ENCODE measurements at regions of chr16 and their contacts with region 1.

Region 1: DNA sequence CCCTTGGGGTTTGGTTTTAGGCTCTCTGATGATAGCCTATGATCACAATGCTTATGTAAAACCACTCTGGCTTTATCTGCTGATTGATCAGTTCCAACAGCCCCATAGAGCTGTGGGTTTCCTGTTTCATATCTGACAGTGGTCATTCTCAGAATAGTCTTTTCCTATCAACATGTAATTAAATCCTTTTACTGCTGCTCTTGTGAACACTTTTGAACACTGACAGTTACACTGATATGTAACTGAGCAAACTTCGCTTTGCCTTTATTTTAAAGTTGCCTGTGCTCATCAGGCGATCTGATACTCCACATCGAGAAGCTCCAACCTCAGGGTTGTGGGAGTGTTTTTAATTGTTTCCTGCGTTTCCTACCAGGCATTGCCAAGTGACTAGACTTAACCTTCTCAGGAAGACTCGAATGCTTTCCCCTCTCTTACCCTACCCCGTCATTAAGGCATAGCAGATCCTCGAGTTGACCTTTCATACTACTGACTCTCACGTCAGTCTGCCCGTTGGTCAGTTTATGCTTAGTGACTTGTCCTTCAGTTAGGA is 17.3 kb upstream of the CLEC18B start:
- DNase-seq: no peak
- H3K4me3 ChIP-seq: no peak overlapping the region
- H3K27ac ChIP-seq: peak overlapping the region; percentile 25
- H3K4me1 ChIP-seq: no peaks in the 10 kb centered on the region
- H3K27me3 ChIP-seq: no peaks in the 10 kb centered on the region
- CTCF ChIP-seq: no peak

Region 2: DNA sequence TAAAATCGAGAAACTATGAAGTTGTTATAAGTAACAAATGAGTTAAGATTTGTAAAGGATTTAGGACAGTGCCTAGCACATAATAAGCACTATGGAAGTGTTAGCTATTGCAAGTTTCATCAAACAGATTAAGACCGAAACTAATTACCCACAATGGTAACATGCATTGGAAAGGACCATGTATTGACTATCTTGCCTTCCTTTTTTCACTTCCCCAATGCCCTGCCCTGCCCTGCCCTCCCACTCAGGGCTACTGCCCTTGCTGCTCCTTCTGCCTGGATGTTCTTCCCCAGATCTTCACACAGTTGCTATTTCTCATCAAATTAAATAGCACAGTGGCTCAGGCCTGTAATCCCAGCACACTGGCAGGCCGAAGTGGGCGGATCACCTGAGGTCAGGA is 344.1 kb before region 1 on chr16:
- CTCF ChIA-PET with region 1: no interaction called
- POLR2A ChIA-PET with region 1: no interaction called
- intact Hi-C with region 1: no loop called
- DNase-seq: no peak
- H3K4me3 ChIP-seq: no peak overlapping the region
- H3K27ac ChIP-seq: no peak overlapping the region
- H3K4me1 ChIP-seq: peaks cover 15% of the 10 kb centered on the region
- H3K27me3 ChIP-seq: no peaks in the 10 kb centered on the region
- CTCF ChIP-seq: no peak

Region 3: DNA sequence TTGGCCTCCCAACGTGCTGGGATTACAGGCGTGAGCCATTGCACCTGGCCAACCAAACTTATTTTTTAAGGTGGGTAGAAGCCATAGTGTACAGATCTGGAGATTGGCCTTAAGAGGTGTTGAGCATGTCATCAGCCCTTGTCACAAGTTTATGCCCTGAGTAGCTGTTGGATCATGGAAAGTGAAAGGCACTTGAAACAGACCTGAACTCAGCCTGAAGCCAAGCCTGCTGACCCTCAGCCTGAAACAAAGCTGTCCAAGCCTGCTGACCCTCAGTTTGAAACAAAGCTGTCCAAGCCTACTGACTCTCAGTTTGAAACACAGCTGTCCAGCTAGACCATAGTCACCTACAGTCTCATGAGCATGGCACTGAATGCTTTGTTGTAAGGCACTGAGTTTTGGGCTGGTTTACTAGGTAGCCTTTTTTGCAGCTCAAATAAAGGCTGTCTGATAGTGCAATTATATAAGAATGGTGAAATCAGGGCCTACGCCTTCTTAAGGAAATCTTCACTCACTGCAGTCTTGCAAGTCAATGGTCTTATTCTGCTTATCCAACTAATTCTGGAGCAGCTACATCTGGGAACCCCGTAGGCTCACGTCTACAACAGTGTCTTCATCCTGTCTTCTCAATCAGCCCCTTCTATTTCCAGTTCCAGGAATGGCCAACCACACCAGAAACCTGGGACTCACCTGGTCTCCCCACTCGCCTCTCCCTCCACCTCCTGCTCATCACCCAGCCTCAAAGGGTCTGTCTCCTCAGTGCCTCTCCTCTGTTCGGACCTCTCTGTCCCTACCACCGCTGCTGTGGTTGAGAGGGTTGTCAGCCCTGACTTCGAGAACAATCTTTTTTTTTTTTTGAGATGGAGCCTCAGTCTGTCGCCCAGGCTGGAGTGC is 65.4 kb before region 1 on chr16:
- CTCF ChIA-PET with region 1: no interaction called
- POLR2A ChIA-PET with region 1: interaction called, 10 read pairs
- intact Hi-C with region 1: no loop called
- DNase-seq: peak; percentile 20
- H3K4me3 ChIP-seq: no peak overlapping the region
- H3K27ac ChIP-seq: no peak overlapping the region
- H3K4me1 ChIP-seq: no peaks in the 10 kb centered on the region
- H3K27me3 ChIP-seq: no peaks in the 10 kb centered on the region
- CTCF ChIP-seq: no peak

Region 4: DNA sequence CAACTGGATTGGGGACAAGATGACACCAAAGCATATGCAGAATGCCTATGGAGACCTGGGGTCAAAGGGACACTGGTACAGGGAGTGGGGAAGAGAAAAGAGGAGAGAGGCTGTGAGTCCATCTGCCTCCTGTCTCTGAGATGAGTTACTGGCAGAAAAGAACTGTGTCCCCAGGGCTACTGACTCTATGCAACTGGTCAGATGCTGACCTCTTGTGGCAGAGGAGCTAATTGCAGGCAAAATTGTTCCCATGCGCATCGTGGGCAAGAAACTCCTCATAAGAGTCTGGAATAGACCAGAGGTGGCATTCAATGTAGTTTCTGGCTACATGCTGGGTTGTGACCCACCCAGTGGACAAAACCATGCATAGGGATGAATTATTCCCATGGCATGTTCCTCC is 288.1 kb after region 1 on chr16:
- CTCF ChIA-PET with region 1: no interaction called
- POLR2A ChIA-PET with region 1: no interaction called
- intact Hi-C with region 1: no loop called
- DNase-seq: peak; percentile 39
- H3K4me3 ChIP-seq: no peak overlapping the region
- H3K27ac ChIP-seq: no peak overlapping the region
- H3K4me1 ChIP-seq: no peaks in the 10 kb centered on the region
- H3K27me3 ChIP-seq: no peaks in the 10 kb centered on the region
- CTCF ChIP-seq: peak; percentile 60

Measured in A673 (cell line).